ENCODE measurements at regions of chr11 and their contacts with region 1.

Region 1: GRCh38 chr11:1515082-1516060 is 28.8 kb upstream of the MOB2 start:
- DNase-seq: peak; percentile 73 to 84
- H3K4me3 ChIP-seq: peak overlapping the region in 1 of 2 donors; percentile 11
- H3K27ac ChIP-seq: no peak overlapping the region
- H3K4me1 ChIP-seq: peaks cover 9 to 23% of the 10 kb centered on the region in 2 donors
- H3K27me3 ChIP-seq: no peaks in the 10 kb centered on the region
- CTCF ChIP-seq: peak; percentile 93 to 96 (median 94)
- POLR2A ChIP-seq: no peak

Region 2: GRCh38 chr11:1202776-1203504 is 312.4 kb before region 1 on chr11:
- intact Hi-C with region 1: loop called (anchors 10 kb)
- DNase-seq: peak; percentile 14 to 53
- H3K4me3 ChIP-seq: no peak overlapping the region
- H3K27ac ChIP-seq: no peak overlapping the region
- H3K4me1 ChIP-seq: no peaks in the 10 kb centered on the region
- H3K27me3 ChIP-seq: peaks cover 0 to 15% of the 10 kb centered on the region in 2 donors
- CTCF ChIP-seq: peak; percentile 81 to 90 (median 82)
- POLR2A ChIP-seq: no peak

Region 3: DNA sequence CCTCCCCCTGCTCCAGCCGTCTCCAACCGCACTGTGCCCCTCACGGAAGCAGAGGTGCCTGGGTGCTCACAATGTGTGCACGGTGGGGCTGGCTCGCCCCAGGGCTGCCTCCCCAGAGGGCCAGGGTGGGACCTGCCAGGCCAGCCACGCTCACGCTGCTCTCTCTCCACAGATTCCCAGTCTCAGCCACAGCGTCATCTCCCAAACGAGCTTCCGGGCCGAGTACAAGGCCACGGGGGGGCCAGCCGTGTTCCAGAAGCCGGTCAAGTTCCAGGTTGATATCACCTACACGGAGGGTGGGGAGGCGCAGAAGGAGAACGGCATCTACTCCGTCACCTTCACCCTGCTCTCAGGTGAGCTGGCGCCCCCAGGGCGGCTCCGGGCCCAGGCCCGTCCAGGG is 59.2 kb before region 1 on chr11:
- intact Hi-C with region 1: loop called (anchors 2 kb)
- DNase-seq: no peak
- H3K4me3 ChIP-seq: no peak overlapping the region
- H3K27ac ChIP-seq: no peak overlapping the region
- H3K4me1 ChIP-seq: peaks cover 0 to 15% of the 10 kb centered on the region in 2 donors
- H3K27me3 ChIP-seq: no peaks in the 10 kb centered on the region
- CTCF ChIP-seq: no peak
- POLR2A ChIP-seq: no peak

Region 4: GRCh38 chr11:1640076-1640946 is 124.9 kb after region 1 on chr11:
- intact Hi-C with region 1: no loop called
- DNase-seq: no peak
- H3K4me3 ChIP-seq: no peak overlapping the region
- H3K27ac ChIP-seq: no peak overlapping the region
- H3K4me1 ChIP-seq: no peaks in the 10 kb centered on the region
- H3K27me3 ChIP-seq: no peaks in the 10 kb centered on the region
- CTCF ChIP-seq: peak in 3 of 4 experiments; percentile 25 to 42 (median 34)
- POLR2A ChIP-seq: no peak

Measured in uterus (tissue), 4 donors.